K562 (cell line): ENCODE measurements at regions of chr21 and their contacts with region 1.

Region 1: DNA sequence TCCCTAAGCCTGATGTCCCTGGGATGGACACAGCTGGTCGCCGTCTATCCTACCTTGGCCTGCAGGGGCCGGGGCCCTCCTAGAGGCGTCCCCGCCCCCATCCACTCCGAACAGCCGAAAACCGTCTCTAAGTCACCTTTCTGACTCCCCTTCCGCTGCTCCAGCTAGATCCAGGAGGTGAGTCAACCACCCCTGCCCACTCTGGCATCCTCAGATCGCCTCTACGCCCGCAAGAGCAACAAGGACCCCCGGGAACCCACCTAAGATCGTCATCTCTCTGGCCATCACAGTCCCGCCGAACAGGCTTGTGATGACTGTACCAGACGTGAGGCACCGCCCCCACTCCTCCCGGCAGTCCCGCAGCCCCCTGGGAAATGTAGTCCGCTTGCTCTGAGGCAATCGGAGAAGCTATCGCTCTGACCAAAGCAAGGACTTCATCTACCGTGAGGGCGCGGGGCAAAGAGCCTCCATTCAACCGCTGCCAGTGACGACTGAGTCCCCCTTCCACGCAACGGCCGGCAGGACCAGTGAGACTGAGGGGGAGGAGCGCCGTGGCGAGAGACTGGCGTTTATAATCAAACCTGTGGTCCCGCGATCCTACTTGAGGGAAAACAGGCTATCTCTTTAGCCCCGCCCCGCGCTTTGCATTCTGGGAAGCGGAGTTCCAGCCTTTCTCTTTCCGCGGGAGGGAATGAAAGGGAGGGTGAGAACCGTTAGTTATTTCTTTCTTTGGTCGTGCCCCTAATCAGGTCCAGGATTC is at the start of gene HSPA13:
- DNase-seq: peak; percentile 90 to 99 (median 92)
- ATAC-seq: peak; percentile 94
- H3K4me3 ChIP-seq: peak within 1 kb of the TSS; percentile 77
- H3K27ac ChIP-seq: peak within 1 kb of the TSS; percentile 92
- H3K4me1 ChIP-seq: peaks cover 0 to 16% of the 10 kb centered on the region in 2 experiments; a peak in 3 of 5 replicates
- H3K27me3 ChIP-seq: no peaks in the 10 kb centered on the region
- CTCF ChIP-seq: peak in 1 of 3 experiments; percentile 3; a peak in 2 of 6 replicates
- EP300 ChIP-seq: no peak
- POLR2A ChIP-seq: peak; percentile 94
- RAD21 ChIP-seq: no peak
- polyA plus RNA-seq, gene HSPA13: 27.5 to 28.8 TPM

Region 2: GRCh38 chr21:14273736-14274538 is 109.1 kb before region 1 on chr21:
- CTCF ChIA-PET with region 1: no interaction called
- POLR2A ChIA-PET with region 1: interaction called, 3 read pairs
- in situ Hi-C with region 1: no loop called
- intact Hi-C with region 1: loop called (anchors 10 kb)
- DNase-seq: peak; percentile 11 to 60 (median 26)
- ATAC-seq: peak; percentile 83
- H3K4me3 ChIP-seq: peak overlapping the region; percentile 23
- H3K27ac ChIP-seq: no peak overlapping the region
- H3K4me1 ChIP-seq: peaks cover 8 to 15% of the 10 kb centered on the region in 2 experiments
- H3K27me3 ChIP-seq: no peaks in the 10 kb centered on the region
- CTCF ChIP-seq: no peak
- EP300 ChIP-seq: no peak
- POLR2A ChIP-seq: no peak
- RAD21 ChIP-seq: no peak

Region 3: DNA sequence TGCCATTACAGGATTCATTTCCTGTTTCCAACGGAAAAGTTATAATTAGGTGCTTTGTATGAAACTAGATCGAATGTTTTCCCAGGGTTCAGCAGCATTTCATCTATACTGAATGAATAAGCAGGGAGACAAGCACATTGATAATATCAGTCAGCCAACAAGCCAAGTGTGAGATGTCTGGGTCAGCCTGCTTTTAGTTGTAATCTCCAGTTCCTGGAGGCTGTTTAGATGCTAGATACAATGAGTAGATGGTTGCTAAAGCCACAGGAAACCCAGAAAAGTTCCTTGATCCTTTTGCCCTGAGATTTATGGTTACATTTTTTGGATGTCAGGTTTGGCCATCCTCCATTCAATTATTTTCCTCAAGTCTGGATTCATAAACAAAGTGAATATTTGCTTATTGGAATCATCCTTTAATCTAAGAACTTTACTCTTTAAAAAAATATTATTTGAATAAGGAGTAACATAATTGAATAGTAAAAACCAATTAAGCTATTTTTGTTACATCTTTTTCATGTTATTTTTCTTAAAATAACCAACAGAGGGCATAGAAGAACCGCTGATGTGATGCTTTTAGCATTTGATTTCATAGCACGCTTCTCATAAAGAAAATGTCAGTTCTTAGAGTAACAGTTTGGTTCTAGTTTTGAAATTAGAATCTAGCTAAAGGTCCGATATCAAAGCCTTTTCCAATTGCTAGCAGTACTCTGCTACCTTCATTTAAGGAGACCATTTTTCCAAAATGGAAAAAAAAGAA is 76.7 kb before region 1 on chr21:
- CTCF ChIA-PET with region 1: no interaction called
- POLR2A ChIA-PET with region 1: no interaction called
- in situ Hi-C with region 1: no loop called
- intact Hi-C with region 1: loop called (anchors 10 kb)
- DNase-seq: peak in 1 of 4 experiments; percentile 26
- ATAC-seq: 0 out of 3 replicates have a peak, but pooled peaks have one; percentile 28
- H3K4me3 ChIP-seq: no peak overlapping the region
- H3K27ac ChIP-seq: no peak overlapping the region
- H3K4me1 ChIP-seq: no peaks in the 10 kb centered on the region
- H3K27me3 ChIP-seq: no peaks in the 10 kb centered on the region; a peak in 1 of 5 replicates
- CTCF ChIP-seq: peak in 2 of 3 experiments; percentile 21 to 62; a peak in 4 of 6 replicates
- EP300 ChIP-seq: no peak
- POLR2A ChIP-seq: no peak
- RAD21 ChIP-seq: peak; percentile 47 to 76; a peak in 3 of 4 replicates

Region 4: DNA sequence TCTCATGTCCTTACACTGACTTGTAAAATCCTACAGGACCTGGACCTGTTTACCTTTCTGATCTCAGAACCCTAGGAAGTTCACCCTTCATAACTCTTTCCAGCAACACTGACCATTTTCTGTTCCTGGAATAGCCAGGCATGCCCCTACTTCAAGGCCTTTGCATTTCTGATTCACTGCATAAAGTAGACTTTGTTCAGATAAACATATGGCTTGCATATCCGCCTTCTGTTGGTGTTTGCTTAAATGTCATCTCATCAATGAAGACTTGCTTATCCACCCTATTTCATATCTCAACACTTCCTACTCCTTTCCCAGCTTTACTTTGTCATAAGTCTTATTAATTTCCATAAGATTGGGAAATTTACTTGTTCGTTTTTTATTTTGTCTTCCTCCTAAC is 57.4 kb before region 1 on chr21:
- CTCF ChIA-PET with region 1: no interaction called
- POLR2A ChIA-PET with region 1: no interaction called
- in situ Hi-C with region 1: no loop called
- intact Hi-C with region 1: no loop called
- DNase-seq: no peak
- ATAC-seq: no peak
- H3K4me3 ChIP-seq: no peak overlapping the region
- H3K27ac ChIP-seq: no peak overlapping the region
- H3K4me1 ChIP-seq: no peaks in the 10 kb centered on the region
- H3K27me3 ChIP-seq: no peaks in the 10 kb centered on the region
- CTCF ChIP-seq: no peak
- EP300 ChIP-seq: no peak
- POLR2A ChIP-seq: no peak
- RAD21 ChIP-seq: no peak

Region 5: GRCh38 chr21:14836950-14837349 is 453.9 kb after region 1 on chr21:
- CTCF ChIA-PET with region 1: no interaction called
- POLR2A ChIA-PET with region 1: no interaction called
- in situ Hi-C with region 1: no loop called
- intact Hi-C with region 1: no loop called
- DNase-seq: no peak
- ATAC-seq: no peak
- H3K4me3 ChIP-seq: no peak overlapping the region
- H3K27ac ChIP-seq: no peak overlapping the region
- H3K4me1 ChIP-seq: no peaks in the 10 kb centered on the region; a peak in 2 of 5 replicates
- H3K27me3 ChIP-seq: no peaks in the 10 kb centered on the region
- CTCF ChIP-seq: no peak
- EP300 ChIP-seq: no peak
- POLR2A ChIP-seq: no peak
- RAD21 ChIP-seq: no peak